OCI-LY7 (cell line): ENCODE measurements at regions of chr18 and their contacts with region 1.

Region 1: GRCh38 chr18:36735130-36735529 is 93.7 kb downstream of the TPGS2 start:
- DNase-seq: peak; percentile 63
- H3K4me3 ChIP-seq: no peak overlapping the region
- H3K27ac ChIP-seq: peak overlapping the region; percentile 42
- H3K4me1 ChIP-seq: peaks cover 17% of the 10 kb centered on the region
- CTCF ChIP-seq: no peak

Region 2: DNA sequence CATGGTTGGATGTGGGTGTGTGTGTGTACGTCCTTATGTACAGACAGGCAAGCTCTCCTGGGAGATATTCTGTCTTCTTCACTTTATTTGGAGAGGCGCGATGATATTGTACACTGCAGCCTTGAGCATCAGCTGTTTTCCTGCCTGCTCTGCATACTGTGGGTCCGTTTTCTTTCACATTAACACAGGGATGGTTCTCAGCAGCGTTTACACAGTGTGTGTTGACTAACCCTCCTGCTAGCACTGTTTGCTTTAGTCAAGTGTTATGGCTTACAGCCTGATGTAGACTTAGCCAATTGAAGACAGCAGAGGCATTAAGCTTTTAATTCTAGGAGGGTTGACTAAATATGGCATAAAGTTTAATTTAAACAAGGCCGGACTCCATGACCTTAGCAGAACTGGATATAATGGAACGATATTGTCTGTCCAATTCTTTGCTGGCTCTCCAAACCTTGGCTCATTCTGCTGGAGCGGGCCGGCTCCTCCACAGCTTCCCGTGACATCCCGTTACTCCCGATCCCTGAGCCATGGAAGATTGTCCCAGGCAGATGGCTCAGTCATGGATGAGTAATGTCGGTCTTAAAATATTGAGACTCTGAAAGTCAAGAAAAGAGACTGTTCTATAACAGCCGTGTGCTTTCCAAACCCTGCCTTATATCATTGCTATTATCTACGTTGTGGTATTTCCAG is 41.1 kb before region 1 on chr18:
- CTCF ChIA-PET with region 1: no interaction called
- POLR2A ChIA-PET with region 1: interaction called, 3 read pairs
- intact Hi-C with region 1: loop called (anchors 5 kb)
- DNase-seq: no peak
- H3K4me3 ChIP-seq: no peak overlapping the region
- H3K27ac ChIP-seq: no peak overlapping the region
- H3K4me1 ChIP-seq: no peaks in the 10 kb centered on the region
- CTCF ChIP-seq: no peak